ENCODE measurements at regions of chr4 and their contacts with region 1.

Region 1: DNA sequence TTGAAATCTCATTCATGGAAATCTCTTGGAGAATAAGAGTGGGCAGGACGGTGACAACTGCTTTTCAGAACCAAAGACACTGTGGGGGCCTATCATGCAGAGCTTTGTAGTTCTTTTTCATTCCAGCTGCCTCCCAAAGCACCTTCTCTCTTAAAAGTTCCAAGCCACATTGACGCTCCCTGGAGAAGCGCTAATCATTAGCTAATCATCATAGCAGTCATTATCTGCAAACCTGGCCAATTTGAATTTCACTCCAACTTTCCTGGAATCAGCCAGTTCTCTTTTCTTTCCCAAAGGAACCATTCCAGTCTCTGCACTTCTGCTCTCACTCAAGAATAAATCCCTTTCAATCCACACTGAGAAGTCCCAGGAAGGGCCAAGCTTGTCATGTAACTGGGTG is 1144.1 kb upstream of the IGFBP7 start:
- DNase-seq: no peak
- H3K4me3 ChIP-seq: no peak overlapping the region
- H3K27ac ChIP-seq: no peak overlapping the region
- H3K4me1 ChIP-seq: no peaks in the 10 kb centered on the region
- H3K27me3 ChIP-seq: no peaks in the 10 kb centered on the region
- CTCF ChIP-seq: no peak

Region 2: DNA sequence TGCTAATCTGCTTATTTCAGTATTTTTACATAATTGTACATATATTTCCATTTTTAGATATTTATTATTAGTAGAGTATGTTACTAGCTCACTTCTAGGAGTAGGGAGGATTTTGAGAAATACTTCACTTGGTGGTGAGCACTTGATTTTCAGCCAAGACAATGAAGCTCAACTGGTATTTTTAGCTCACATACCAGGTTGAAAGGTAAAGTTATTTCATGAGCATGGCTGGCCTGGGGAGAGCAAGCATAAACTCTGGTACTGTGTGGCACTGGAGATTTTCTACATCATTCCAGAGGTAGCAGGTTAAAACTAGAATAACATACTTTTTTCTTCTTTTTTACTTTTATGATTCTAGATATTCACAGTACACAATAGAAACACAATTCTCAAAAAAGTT is 277.4 kb before region 1 on chr4:
- intact Hi-C with region 1: no loop called
- DNase-seq: no peak
- H3K4me3 ChIP-seq: no peak overlapping the region
- H3K27ac ChIP-seq: no peak overlapping the region
- H3K4me1 ChIP-seq: no peaks in the 10 kb centered on the region
- H3K27me3 ChIP-seq: no peaks in the 10 kb centered on the region
- CTCF ChIP-seq: no peak

Region 3: DNA sequence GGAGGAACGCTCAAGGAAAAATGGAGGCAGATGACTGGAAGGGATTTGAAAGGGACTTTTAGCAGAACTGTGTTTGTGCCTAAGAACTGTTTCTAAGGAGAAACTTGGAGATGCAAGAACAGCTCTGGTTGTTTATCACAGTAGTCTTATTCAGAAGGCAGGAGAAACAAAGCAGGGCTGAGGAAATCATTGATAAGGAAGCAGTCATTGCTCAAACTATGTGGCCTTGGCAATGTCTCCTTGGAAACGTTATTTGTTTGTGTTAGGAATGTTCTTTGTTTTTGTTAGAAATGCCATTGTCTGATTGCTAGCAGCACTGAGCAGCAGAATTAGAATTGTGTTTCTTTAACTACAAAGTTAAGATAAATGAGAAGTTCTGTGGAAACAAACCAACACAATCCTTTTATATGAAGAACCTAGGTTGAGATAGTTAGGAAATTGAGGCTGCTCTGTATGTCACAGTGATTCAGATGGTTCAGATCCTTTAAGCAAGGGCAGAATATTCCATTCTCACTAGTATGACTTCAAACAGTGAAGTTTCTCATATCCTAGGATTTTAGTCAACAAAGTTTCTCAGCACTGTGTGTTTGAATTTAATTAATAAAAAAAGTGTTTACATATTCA is 47.2 kb after region 1 on chr4:
- intact Hi-C with region 1: loop called (anchors 2 kb)
- DNase-seq: no peak
- H3K4me3 ChIP-seq: no peak overlapping the region
- H3K27ac ChIP-seq: no peak overlapping the region
- H3K4me1 ChIP-seq: peaks cover 0 to 9% (median 3%) of the 10 kb centered on the region in 4 donors
- H3K27me3 ChIP-seq: no peaks in the 10 kb centered on the region
- CTCF ChIP-seq: no peak